H1 (cell line): ENCODE measurements at regions of chr2 and their contacts with region 1.

Region 1: DNA sequence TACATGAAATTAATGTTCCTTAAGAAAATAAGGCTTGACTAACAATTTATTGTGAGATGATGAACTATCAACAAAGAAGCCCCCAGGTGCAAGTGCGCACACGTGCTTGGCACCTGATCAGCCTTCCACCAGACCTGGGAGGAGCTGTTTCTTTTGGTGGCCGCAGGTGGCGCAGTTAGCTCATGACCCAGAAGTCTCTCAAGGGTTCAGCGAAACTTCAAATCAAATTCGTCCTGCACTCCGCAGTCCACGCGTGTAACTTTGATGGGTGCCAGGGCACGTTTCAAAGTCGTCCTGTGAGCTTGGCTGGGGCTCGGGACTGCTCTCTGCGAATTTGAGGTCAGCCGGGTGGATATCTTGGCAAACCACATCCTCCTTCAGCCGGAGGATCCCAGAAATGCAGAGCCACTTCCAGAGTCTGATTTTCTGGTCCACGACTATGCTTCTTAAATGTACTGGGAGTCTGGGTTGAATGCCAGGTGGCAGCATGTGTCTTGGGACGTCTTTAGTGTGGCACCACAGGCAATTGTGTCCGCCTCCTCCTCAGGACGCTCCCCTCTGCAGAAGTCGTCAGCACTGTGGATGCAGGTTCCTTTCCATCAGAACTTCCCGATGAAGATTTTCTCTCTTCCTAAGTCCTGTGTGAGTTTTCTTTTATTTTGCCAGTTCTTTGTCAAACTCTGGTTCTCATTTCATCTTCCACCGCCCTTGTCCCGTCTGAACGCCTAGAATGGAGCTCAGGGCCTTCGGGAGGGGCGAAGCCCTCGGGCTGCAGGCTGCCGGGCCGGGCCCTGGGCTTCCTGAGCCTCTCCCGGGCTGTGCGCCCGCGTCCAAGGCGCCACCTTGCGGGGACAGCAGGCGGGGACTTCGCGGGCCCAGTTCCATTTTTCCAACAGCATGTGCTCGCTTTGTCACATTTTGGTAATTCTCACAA is 61.3 kb upstream of the RAPGEF4 start:
- DNase-seq: peak; percentile 47 to 89
- H3K4me3 ChIP-seq: no peak overlapping the region
- H3K27ac ChIP-seq: no peak overlapping the region
- H3K4me1 ChIP-seq: peaks cover 0 to 4% (median 0%) of the 10 kb centered on the region in 4 experiments; a peak in 1 of 7 replicates
- H3K27me3 ChIP-seq: peaks cover 0 to 4% (median 2%) of the 10 kb centered on the region in 4 experiments; a peak in 2 of 7 replicates
- CTCF ChIP-seq: peak; percentile 78 to 95 (median 81)
- EP300 ChIP-seq: no peak
- POLR2A ChIP-seq: no peak
- RAD21 ChIP-seq: peak; percentile 80 to 85

Region 2: DNA sequence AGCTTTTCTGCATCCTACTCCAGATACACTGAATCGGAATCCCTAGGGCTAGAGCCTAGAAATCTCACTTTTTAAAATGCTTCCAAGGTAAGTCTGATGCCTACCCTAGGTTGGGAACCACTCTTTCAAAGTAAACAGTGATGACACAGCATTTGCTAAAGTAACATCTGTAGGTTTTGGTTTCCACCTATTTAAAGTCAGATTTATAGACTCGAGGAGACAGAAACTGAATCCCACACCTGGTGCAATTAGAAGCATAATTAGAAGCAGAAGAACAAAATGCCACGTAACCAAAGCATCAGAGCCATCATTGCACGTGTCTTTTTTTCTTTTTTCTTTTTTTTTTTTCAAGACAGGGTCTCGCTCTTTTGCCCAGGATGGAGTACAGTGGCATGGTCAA is 77.5 kb before region 1 on chr2:
- CTCF ChIA-PET with region 1: interaction called, 40 read pairs
- POLR2A ChIA-PET with region 1: no interaction called
- DNase-seq: no peak
- H3K4me3 ChIP-seq: no peak overlapping the region
- H3K27ac ChIP-seq: no peak overlapping the region
- H3K4me1 ChIP-seq: peaks cover 0 to 4% (median 0%) of the 10 kb centered on the region in 4 experiments; a peak in 1 of 7 replicates
- H3K27me3 ChIP-seq: no peaks in the 10 kb centered on the region
- CTCF ChIP-seq: no peak
- EP300 ChIP-seq: no peak
- POLR2A ChIP-seq: no peak
- RAD21 ChIP-seq: no peak

Region 3: DNA sequence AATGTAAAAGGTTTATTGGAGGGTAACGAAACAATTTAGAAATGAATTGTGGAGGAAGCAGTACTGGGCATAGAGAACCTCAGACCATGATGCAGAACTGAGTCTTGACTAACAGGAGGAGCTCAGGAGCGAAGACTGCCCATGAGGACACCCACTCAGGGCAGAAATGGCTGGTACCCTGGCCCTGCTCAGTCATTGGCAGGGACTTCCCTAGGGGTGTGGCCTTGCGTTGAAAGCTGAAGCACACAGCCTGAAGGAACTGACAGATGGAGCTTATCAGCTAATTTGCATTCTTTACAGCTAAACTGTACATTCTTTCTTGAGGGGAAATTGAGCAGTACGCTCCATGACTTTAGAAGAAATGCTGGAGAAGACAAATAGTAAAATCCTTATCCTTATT is 61.3 kb before region 1 on chr2:
- CTCF ChIA-PET with region 1: interaction called, 28 read pairs
- POLR2A ChIA-PET with region 1: no interaction called
- DNase-seq: no peak
- H3K4me3 ChIP-seq: no peak overlapping the region
- H3K27ac ChIP-seq: no peak overlapping the region
- H3K4me1 ChIP-seq: no peaks in the 10 kb centered on the region
- H3K27me3 ChIP-seq: no peaks in the 10 kb centered on the region
- CTCF ChIP-seq: no peak
- EP300 ChIP-seq: no peak
- POLR2A ChIP-seq: no peak
- RAD21 ChIP-seq: no peak

Region 4: GRCh38 chr2:172662099-172662498 is 12.2 kb before region 1 on chr2:
- CTCF ChIA-PET with region 1: interaction called, 28 read pairs
- POLR2A ChIA-PET with region 1: interaction called, 4 read pairs
- DNase-seq: no peak
- H3K4me3 ChIP-seq: no peak overlapping the region
- H3K27ac ChIP-seq: no peak overlapping the region
- H3K4me1 ChIP-seq: peaks cover 0 to 2% (median 0%) of the 10 kb centered on the region in 4 experiments; a peak in 1 of 7 replicates
- H3K27me3 ChIP-seq: 0 out of 7 replicates have a peak, but pooled peaks cover 0 to under 1% (median 0%) of the 10 kb centered on the region in 4 experiments
- CTCF ChIP-seq: no peak
- EP300 ChIP-seq: no peak
- POLR2A ChIP-seq: no peak
- RAD21 ChIP-seq: no peak

Region 5: GRCh38 chr2:172693037-172693436 is 18.7 kb after region 1 on chr2:
- CTCF ChIA-PET with region 1: interaction called, 41 read pairs
- POLR2A ChIA-PET with region 1: no interaction called
- DNase-seq: no peak
- H3K4me3 ChIP-seq: no peak overlapping the region
- H3K27ac ChIP-seq: no peak overlapping the region
- H3K4me1 ChIP-seq: no peaks in the 10 kb centered on the region
- H3K27me3 ChIP-seq: no peaks in the 10 kb centered on the region
- CTCF ChIP-seq: no peak
- EP300 ChIP-seq: no peak
- POLR2A ChIP-seq: no peak
- RAD21 ChIP-seq: no peak